GM12878 (cell line): ENCODE measurements at regions of chr10 and their contacts with region 1.

Region 1: GRCh38 chr10:67612577-67613537 is 83.1 kb downstream of the CTNNA3 start:
- DNase-seq: peak; percentile 59
- ATAC-seq: peak; percentile 99
- H3K4me3 ChIP-seq: no peak overlapping the region
- H3K27ac ChIP-seq: no peak overlapping the region
- H3K4me1 ChIP-seq: no peaks in the 10 kb centered on the region
- H3K27me3 ChIP-seq: no peaks in the 10 kb centered on the region
- CTCF ChIP-seq: no peak
- EP300 ChIP-seq: 0 out of 4 replicates have a peak, but pooled peaks of 1 of the 2 experiments have one; percentile 35
- POLR2A ChIP-seq: no peak
- RAD21 ChIP-seq: no peak

Region 2: GRCh38 chr10:67629461-67629971 is 16.7 kb after region 1 on chr10:
- CTCF ChIA-PET with region 1: interaction called, 3 read pairs
- POLR2A ChIA-PET with region 1: interaction called, 5 read pairs
- RAD21 ChIA-PET with region 1: interaction called, 6 read pairs
- SMC1A ChIA-PET with region 1: interaction called, 14 read pairs
- in situ Hi-C with region 1: no loop called
- intact Hi-C with region 1: no loop called
- DNase-seq: peak; percentile 36
- ATAC-seq: peak; percentile 86
- H3K4me3 ChIP-seq: no peak overlapping the region
- H3K27ac ChIP-seq: no peak overlapping the region
- H3K4me1 ChIP-seq: no peaks in the 10 kb centered on the region; the same call in 1 of the 2 replicates
- H3K27me3 ChIP-seq: no peaks in the 10 kb centered on the region
- CTCF ChIP-seq: no peak
- EP300 ChIP-seq: no peak
- POLR2A ChIP-seq: no peak
- RAD21 ChIP-seq: no peak

Region 3: DNA sequence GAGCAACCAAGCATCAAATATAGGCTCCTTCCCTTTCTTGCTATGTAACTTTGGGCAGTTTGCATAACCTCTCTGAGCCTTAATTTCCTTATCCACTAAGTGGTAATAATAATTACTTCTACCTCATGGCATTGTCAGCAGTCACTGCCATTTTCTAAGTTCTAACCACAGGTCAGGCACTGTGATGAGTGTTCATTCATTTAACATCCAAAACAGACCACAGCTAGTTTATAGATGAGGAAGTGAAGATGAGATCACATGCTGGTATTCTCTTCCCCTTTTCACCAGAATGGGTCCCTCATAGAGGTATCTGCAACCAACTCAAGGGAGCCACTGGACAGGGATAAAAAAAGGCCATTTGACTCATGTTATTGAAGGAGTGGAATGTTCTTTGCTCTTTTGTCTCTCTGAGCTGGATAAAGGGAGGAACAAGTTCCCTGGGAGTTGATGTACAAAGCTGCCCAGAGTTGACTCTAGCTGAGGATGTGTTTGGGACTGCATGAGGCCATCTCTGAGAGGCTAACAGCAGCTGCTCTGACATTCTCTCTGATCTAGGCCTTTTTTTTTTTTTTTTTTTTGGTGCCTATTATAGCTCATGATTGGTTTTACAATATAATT is 160.1 kb after region 1 on chr10:
- CTCF ChIA-PET with region 1: no interaction called
- POLR2A ChIA-PET with region 1: interaction called, 3 read pairs
- RAD21 ChIA-PET with region 1: interaction called, 6 read pairs
- SMC1A ChIA-PET with region 1: interaction called, 8 read pairs
- in situ Hi-C with region 1: no loop called
- intact Hi-C with region 1: loop called (anchors 2 kb)
- DNase-seq: peak; percentile 90
- ATAC-seq: peak; percentile 93
- H3K4me3 ChIP-seq: no peak overlapping the region
- H3K27ac ChIP-seq: peak overlapping the region; percentile 82
- H3K4me1 ChIP-seq: peaks cover 42% of the 10 kb centered on the region
- H3K27me3 ChIP-seq: no peaks in the 10 kb centered on the region
- CTCF ChIP-seq: no peak
- EP300 ChIP-seq: peak; percentile 87 to 96
- POLR2A ChIP-seq: no peak
- RAD21 ChIP-seq: no peak

Region 4: GRCh38 chr10:68023292-68023691 is 410.4 kb after region 1 on chr10:
- CTCF ChIA-PET with region 1: no interaction called
- POLR2A ChIA-PET with region 1: no interaction called
- RAD21 ChIA-PET with region 1: no interaction called
- SMC1A ChIA-PET with region 1: no interaction called
- in situ Hi-C with region 1: no loop called
- intact Hi-C with region 1: no loop called
- DNase-seq: no peak
- ATAC-seq: no peak
- H3K4me3 ChIP-seq: no peak overlapping the region
- H3K27ac ChIP-seq: no peak overlapping the region
- H3K4me1 ChIP-seq: no peaks in the 10 kb centered on the region
- H3K27me3 ChIP-seq: no peaks in the 10 kb centered on the region
- CTCF ChIP-seq: no peak
- EP300 ChIP-seq: no peak
- POLR2A ChIP-seq: no peak
- RAD21 ChIP-seq: no peak